ENCODE measurements at regions of chr9 and their contacts with region 1.

Region 1: GRCh38 chr9:127916665-127917613 is at the start of gene ST6GALNAC4:
- DNase-seq: peak; percentile 96
- ATAC-seq: peak; percentile 93
- H3K4me3 Mint-ChIP-seq: peak within 1 kb of the TSS; percentile 89
- H3K27ac Mint-ChIP-seq: peak within 1 kb of the TSS; percentile 95
- H3K4me1 Mint-ChIP-seq: peaks cover 75% of the 10 kb centered on the region
- H3K27me3 Mint-ChIP-seq: no peaks in the 10 kb centered on the region
- total RNA-seq, gene ST6GALNAC4: 37.0 to 39.7 TPM

Region 2: DNA sequence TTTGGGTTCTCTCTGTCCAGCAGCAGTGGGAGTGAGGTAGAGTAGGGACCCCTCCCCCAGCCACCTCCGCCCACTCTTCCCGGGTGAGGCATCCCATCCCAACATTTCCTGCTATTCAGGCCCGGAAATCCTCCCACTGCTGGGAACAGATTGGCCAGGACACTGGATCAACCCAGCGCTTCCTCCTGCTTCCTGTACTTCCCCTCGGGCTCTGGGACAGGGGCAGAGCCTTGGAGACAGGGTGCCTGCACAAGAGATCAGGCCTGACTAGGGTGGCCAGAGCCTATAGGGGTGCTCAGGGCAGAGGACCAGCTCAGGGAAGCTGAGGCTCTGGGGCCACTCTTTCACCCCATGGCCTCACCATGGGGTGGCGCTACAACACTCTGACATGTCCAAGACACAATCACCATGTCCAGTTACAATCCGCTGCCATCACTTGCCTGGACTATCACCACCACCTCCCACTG is 153.0 kb before region 1 on chr9:
- CTCF ChIA-PET with region 1: interaction called, 17 read pairs
- POLR2A ChIA-PET with region 1: no interaction called
- DNase-seq: peak; percentile 42
- ATAC-seq: peak; percentile 45
- H3K4me3 Mint-ChIP-seq: no peak overlapping the region
- H3K27ac Mint-ChIP-seq: peak overlapping the region; percentile 57
- H3K4me1 Mint-ChIP-seq: peaks cover 58% of the 10 kb centered on the region
- H3K27me3 Mint-ChIP-seq: no peaks in the 10 kb centered on the region

Region 3: GRCh38 chr9:127862075-127863011 is 54.6 kb before region 1 on chr9:
- CTCF ChIA-PET with region 1: interaction called, 12 read pairs
- POLR2A ChIA-PET with region 1: interaction called, 3 read pairs
- DNase-seq: peak; percentile 78
- ATAC-seq: peak; percentile 71
- H3K4me3 Mint-ChIP-seq: peak overlapping the region; percentile 20
- H3K27ac Mint-ChIP-seq: peak overlapping the region; percentile 93
- H3K4me1 Mint-ChIP-seq: peaks cover 52% of the 10 kb centered on the region
- H3K27me3 Mint-ChIP-seq: no peaks in the 10 kb centered on the region

Region 4: DNA sequence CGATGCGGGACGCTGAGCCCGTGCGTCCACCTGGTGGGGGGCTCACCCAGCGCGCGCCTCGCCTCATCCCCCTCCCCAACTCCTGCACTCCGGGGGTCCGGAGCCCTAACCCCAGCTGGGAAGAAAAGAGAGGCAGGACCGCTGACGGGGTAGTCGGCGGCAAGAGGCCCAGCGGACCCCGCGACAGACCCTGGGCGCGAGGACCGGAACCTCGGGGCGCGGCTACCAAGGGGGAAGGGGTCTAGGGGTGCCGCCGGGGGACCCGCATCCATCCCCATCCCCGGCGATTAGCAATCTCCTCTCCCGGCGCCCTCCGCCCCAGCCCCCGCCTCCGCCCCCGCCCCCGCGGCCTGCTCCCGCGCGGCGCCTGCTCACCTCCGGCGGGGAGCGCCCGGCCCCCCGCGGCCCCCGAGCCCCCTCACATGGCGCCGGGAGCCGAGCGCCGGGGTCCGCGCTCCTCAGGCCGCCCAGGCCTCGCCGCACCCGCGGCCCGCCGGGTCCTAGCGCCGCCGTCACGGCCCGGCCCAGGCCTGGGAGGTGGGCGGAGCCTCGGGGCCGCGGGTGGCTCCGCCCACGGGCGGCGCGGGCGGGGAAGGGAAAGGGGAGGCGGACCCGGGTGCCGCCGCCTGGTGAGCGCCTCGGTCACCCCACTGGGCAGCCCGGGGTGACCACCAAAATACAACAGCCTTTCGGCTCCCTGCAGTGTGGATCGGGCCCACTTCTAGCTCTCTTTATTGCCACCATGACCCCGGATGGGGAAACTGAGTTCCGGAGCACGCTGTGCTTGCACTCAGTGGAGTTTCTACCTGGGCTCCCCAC is 17.6 kb before region 1 on chr9 and contains the start of gene ST6GALNAC6:
- CTCF ChIA-PET with region 1: interaction called, 34 read pairs
- POLR2A ChIA-PET with region 1: interaction called, 81 read pairs
- DNase-seq: peak; percentile 73
- ATAC-seq: peak; percentile 77
- H3K4me3 Mint-ChIP-seq: peak within 1 kb of the TSS; percentile 83
- H3K27ac Mint-ChIP-seq: peak within 1 kb of the TSS; percentile 86
- H3K4me1 Mint-ChIP-seq: peaks cover 39% of the 10 kb centered on the region
- H3K27me3 Mint-ChIP-seq: no peaks in the 10 kb centered on the region
- total RNA-seq, gene ST6GALNAC6: 68.6 to 77.6 TPM